ENCODE measurements at regions of chr3 and their contacts with region 1.

Region 1: DNA sequence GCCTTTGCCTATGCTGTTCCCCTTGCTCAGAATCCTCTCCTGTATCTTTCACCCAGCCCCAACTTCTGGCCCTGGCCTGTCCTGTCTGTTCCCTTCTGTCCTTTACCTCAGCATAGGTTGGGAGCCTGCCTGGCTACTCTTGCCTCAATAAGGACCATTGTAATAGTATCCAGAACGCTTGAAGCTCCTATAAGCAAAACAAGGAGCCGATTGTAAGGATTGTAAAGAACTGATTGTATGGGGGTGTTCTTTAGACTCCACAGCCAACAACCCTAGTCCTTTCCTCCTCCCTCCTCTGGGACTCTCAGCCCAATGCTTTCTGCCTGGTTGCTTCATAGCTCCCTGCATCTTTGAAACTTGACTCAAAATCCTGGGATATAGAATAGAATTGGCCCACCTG is 18.7 kb upstream of the RAD54L2 start:
- DNase-seq: no peak
- H3K4me3 ChIP-seq: no peak overlapping the region
- H3K27ac ChIP-seq: no peak overlapping the region
- H3K4me1 ChIP-seq: no peaks in the 10 kb centered on the region
- H3K27me3 ChIP-seq: no peaks in the 10 kb centered on the region
- CTCF ChIP-seq: no peak

Region 2: DNA sequence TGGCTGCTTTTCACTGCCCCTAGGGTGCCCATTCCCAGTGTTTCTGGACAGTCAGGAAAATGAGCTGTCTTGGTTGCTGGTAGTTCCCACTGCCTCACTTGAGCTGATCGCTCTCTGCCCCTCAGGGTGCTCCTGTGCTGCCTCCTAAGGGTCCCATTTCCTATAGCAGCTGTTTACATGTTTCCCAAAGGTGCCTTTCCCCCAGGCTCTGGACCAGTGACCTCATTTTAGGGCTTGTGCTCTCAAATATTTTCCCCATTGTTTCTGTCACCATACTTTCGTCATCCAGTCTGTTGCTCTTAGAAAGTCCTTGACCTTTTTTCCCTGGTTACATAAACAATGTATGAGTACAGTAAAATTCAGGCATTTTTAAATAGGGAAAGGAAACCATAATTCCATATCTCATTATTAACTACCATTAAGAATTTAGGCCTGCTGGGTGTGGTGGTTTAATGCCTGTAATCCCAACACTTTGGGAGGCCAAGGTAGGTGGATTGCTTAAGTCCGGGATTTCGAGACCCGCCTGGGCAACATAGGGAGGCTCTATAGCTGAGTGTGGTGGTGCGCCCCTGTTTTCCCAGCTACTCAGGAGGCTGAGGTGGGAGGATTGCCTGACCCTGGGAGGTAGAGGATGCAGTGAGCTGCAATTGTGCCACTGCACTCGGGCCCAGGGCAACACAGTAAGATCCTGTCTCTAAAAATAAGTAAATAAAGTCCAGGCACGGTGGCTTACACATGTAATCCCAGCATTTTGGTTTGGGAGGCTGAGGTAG is 30.4 kb after region 1 on chr3:
- CTCF ChIA-PET with region 1: no interaction called
- POLR2A ChIA-PET with region 1: interaction called, 10 read pairs
- intact Hi-C with region 1: no loop called
- DNase-seq: no peak
- H3K4me3 ChIP-seq: no peak overlapping the region
- H3K27ac ChIP-seq: no peak overlapping the region
- H3K4me1 ChIP-seq: no peaks in the 10 kb centered on the region
- H3K27me3 ChIP-seq: no peaks in the 10 kb centered on the region
- CTCF ChIP-seq: no peak

Region 3: GRCh38 chr3:51637941-51638471 is 118.2 kb after region 1 on chr3:
- CTCF ChIA-PET with region 1: interaction called, 14 read pairs
- POLR2A ChIA-PET with region 1: no interaction called
- intact Hi-C with region 1: no loop called
- DNase-seq: peak; percentile 49
- H3K4me3 ChIP-seq: no peak overlapping the region
- H3K27ac ChIP-seq: no peak overlapping the region
- H3K4me1 ChIP-seq: no peaks in the 10 kb centered on the region
- H3K27me3 ChIP-seq: no peaks in the 10 kb centered on the region
- CTCF ChIP-seq: peak; percentile 64

Measured in A673 (cell line).